A673 (cell line): ENCODE measurements at regions of chr22 and their contacts with region 1.

Region 1: GRCh38 chr22:30089655-30089974 is 9.4 kb downstream of the HORMAD2 start:
- DNase-seq: no peak
- H3K4me3 ChIP-seq: no peak overlapping the region
- H3K27ac ChIP-seq: no peak overlapping the region
- H3K4me1 ChIP-seq: no peaks in the 10 kb centered on the region
- H3K27me3 ChIP-seq: no peaks in the 10 kb centered on the region
- CTCF ChIP-seq: no peak

Region 2: GRCh38 chr22:29394931-29395581 is 694.6 kb before region 1 on chr22:
- CTCF ChIA-PET with region 1: no interaction called
- POLR2A ChIA-PET with region 1: no interaction called
- intact Hi-C with region 1: loop called (anchors 1 kb)
- DNase-seq: peak; percentile 87
- H3K4me3 ChIP-seq: no peak overlapping the region
- H3K27ac ChIP-seq: no peak overlapping the region
- H3K4me1 ChIP-seq: no peaks in the 10 kb centered on the region
- H3K27me3 ChIP-seq: no peaks in the 10 kb centered on the region
- CTCF ChIP-seq: peak; percentile 93

Region 3: GRCh38 chr22:29587938-29588699 is 501.5 kb before region 1 on chr22:
- CTCF ChIA-PET with region 1: interaction called, 17 read pairs
- POLR2A ChIA-PET with region 1: no interaction called
- intact Hi-C with region 1: loop called (anchors 2 kb)
- DNase-seq: peak; percentile 26
- H3K4me3 ChIP-seq: no peak overlapping the region
- H3K27ac ChIP-seq: no peak overlapping the region
- H3K4me1 ChIP-seq: no peaks in the 10 kb centered on the region
- H3K27me3 ChIP-seq: no peaks in the 10 kb centered on the region
- CTCF ChIP-seq: no peak

Region 4: GRCh38 chr22:29635734-29636357 is 453.8 kb before region 1 on chr22:
- CTCF ChIA-PET with region 1: interaction called, 23 read pairs
- POLR2A ChIA-PET with region 1: no interaction called
- intact Hi-C with region 1: loop called (anchors 2 kb)
- DNase-seq: peak; percentile 76
- H3K4me3 ChIP-seq: no peak overlapping the region
- H3K27ac ChIP-seq: no peak overlapping the region
- H3K4me1 ChIP-seq: peaks cover 17% of the 10 kb centered on the region
- H3K27me3 ChIP-seq: peaks cover 9% of the 10 kb centered on the region
- CTCF ChIP-seq: peak; percentile 78

Region 5: GRCh38 chr22:29689880-29690213 is 399.8 kb before region 1 on chr22:
- CTCF ChIA-PET with region 1: interaction called, 16 read pairs
- POLR2A ChIA-PET with region 1: no interaction called
- intact Hi-C with region 1: no loop called
- DNase-seq: peak; percentile 86
- H3K4me3 ChIP-seq: peak overlapping the region; percentile 13
- H3K27ac ChIP-seq: peak overlapping the region; percentile 71
- H3K4me1 ChIP-seq: peaks cover 63% of the 10 kb centered on the region
- H3K27me3 ChIP-seq: no peaks in the 10 kb centered on the region
- CTCF ChIP-seq: peak; percentile 91

Region 6: DNA sequence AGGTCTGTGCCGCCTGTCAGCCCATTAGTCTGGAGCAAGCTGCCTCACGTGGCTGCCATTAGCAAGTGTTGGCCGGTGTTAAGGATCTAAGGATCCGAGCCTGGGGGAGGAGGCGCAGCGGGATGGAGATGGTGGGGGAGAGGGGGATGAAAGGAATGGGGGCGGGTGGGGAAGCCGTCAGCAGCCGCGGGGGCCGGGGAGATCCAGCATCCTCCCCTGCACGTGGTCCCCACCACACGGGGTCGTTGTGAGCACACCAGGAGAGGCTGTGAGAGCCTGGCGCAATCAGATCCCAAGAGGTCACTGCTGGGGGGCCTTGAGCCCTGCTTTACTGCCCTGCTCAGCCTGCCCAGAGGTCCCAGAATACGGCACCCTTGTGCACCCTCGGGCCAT is 362.5 kb before region 1 on chr22:
- CTCF ChIA-PET with region 1: no interaction called
- POLR2A ChIA-PET with region 1: no interaction called
- intact Hi-C with region 1: loop called (anchors 5 kb)
- DNase-seq: peak; percentile 56
- H3K4me3 ChIP-seq: no peak overlapping the region
- H3K27ac ChIP-seq: no peak overlapping the region
- H3K4me1 ChIP-seq: no peaks in the 10 kb centered on the region
- H3K27me3 ChIP-seq: peaks cover 4% of the 10 kb centered on the region
- CTCF ChIP-seq: peak; percentile 51

Region 7: DNA sequence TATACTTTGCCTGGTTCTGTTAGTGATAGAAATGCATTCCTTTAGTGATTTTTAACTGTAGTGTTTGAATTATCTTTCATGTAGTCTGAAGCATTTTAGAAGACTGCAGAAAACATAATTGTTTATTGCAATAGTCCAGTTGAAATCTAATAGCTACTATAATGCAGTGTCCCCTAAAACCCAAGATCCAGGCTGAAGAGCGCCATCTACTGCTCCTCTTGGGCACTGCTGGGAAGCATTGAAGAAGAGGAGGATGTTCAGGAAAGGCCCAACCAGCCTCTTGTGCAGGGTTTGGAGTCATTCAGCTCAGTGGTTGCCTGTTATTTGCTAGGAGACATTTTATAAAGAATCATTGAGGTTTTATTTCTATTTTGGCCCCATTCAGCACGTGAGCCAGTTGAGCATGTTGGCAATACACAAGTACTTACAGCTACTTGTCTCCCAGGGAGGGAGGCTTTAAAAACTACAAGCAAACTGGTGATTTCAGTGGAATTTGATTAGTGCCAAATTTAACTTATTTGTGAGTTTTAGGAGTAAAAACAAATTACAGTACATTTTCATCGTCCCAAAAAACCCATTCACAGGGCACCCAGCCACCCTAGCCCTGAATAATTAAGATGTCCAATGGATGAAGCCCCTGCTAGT is 84.3 kb before region 1 on chr22:
- CTCF ChIA-PET with region 1: interaction called, 5 read pairs
- POLR2A ChIA-PET with region 1: no interaction called
- intact Hi-C with region 1: loop called (anchors 5 kb)
- DNase-seq: peak; percentile 82
- H3K4me3 ChIP-seq: no peak overlapping the region
- H3K27ac ChIP-seq: no peak overlapping the region
- H3K4me1 ChIP-seq: peaks cover 13% of the 10 kb centered on the region
- H3K27me3 ChIP-seq: no peaks in the 10 kb centered on the region
- CTCF ChIP-seq: peak; percentile 98